IMR-90 (cell line): ENCODE measurements at regions of chr12 and their contacts with region 1.

Region 1: GRCh38 chr12:50845021-50845647 is 2.4 kb downstream of the TMPRSS12 start:
- DNase-seq: peak; percentile 33
- ATAC-seq: no peak
- H3K4me3 ChIP-seq: no peak overlapping the region
- H3K27ac ChIP-seq: no peak overlapping the region
- H3K4me1 ChIP-seq: no peaks in the 10 kb centered on the region
- H3K27me3 ChIP-seq: no peaks in the 10 kb centered on the region
- CTCF ChIP-seq: no peak
- POLR2A ChIP-seq: no peak
- RAD21 ChIP-seq: no peak

Region 2: GRCh38 chr12:49945394-49946080 is 899.6 kb before region 1 on chr12:
- CTCF ChIA-PET with region 1: no interaction called
- POLR2A ChIA-PET with region 1: no interaction called
- dilution Hi-C with region 1: no loop called
- in situ Hi-C with region 1: no loop called
- intact Hi-C with region 1: no loop called
- DNase-seq: peak; percentile 79
- ATAC-seq: peak; percentile 100
- H3K4me3 ChIP-seq: no peak overlapping the region
- H3K27ac ChIP-seq: no peak overlapping the region
- H3K4me1 ChIP-seq: no peaks in the 10 kb centered on the region; the same call in 1 of the 2 replicates
- H3K27me3 ChIP-seq: peaks cover 12% of the 10 kb centered on the region; the same call in 1 of the 2 replicates
- CTCF ChIP-seq: peak; percentile 90
- POLR2A ChIP-seq: no peak
- RAD21 ChIP-seq: peak; percentile 55

Region 3: DNA sequence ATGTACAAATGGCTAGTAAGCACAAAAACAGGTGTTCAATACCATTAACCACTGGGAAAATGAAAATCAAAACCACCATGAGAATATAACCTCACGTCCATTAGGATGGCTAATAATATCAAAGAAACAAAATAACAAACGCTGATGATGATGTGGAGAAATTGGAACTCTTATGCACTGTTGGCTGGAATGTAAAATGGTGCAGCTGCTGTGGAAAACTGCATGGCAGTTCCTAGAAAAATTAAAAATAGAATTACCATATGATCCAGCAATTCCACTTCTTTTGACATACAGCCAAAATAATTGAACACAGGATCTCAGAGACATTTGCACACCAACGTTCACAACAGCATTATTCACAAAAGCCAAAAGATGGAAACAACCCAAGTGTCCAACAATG is 49.1 kb after region 1 on chr12:
- CTCF ChIA-PET with region 1: no interaction called
- POLR2A ChIA-PET with region 1: no interaction called
- dilution Hi-C with region 1: no loop called
- in situ Hi-C with region 1: no loop called
- intact Hi-C with region 1: loop called (anchors 2 kb)
- DNase-seq: no peak
- ATAC-seq: no peak
- H3K4me3 ChIP-seq: no peak overlapping the region
- H3K27ac ChIP-seq: no peak overlapping the region
- H3K4me1 ChIP-seq: no peaks in the 10 kb centered on the region
- H3K27me3 ChIP-seq: no peaks in the 10 kb centered on the region
- CTCF ChIP-seq: no peak
- POLR2A ChIP-seq: no peak
- RAD21 ChIP-seq: no peak